Testis (tissue), 5 donors: ENCODE measurements at regions of chr5 and their contacts with region 1.

Region 1: GRCh38 chr5:67809589-67809988 is 406.0 kb upstream of the PIK3R1 start:
- DNase-seq: no peak
- H3K4me3 ChIP-seq: no peak overlapping the region
- H3K27ac ChIP-seq: no peak overlapping the region
- H3K4me1 ChIP-seq: peaks cover 19% of the 10 kb centered on the region
- H3K27me3 ChIP-seq: no peaks in the 10 kb centered on the region
- CTCF ChIP-seq: no peak
- POLR2A ChIP-seq: no peak

Region 2: DNA sequence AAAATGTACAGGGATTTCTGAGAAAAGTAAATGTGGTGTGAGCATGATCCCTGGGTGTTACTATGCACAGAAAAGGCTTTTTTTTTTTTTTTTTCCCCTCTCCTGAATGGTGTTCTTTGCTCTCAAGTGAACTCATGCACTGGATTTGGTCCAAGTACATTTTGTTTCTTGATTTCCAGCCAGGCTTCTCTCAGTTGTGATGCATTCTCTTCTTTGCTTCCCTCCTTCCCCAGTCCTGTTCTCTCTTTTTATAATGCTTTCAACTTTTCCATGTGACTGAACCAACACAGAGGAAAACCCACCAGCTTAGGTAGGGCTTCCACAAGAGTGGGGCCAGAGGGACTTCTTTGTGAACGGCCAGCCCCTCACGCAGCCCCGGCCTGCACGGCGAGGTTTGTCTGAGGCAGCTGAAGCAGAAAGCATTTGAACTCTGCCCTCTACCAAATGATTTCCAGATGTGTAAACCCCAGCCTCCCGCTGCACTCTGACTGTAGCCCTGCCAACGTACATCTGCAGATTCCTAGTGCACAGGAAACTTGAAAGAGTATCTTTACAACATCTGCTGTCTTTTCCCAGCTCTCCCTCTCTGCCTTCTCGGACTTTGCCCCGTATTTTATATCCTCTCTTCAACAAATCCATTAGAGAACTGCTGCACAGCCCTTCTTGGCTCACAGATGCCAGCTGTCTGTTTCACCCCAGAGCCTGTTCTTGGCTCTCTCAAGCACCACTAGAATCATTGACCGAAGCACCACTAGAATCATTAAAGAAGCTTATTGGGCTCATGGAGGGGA is 541.2 kb before region 1 on chr5:
- intact Hi-C with region 1: loop called (anchors 10 kb)
- DNase-seq: peak; percentile 89
- H3K4me3 ChIP-seq: no peak overlapping the region
- H3K27ac ChIP-seq: peak overlapping the region; percentile 81 to 84
- H3K4me1 ChIP-seq: peaks cover 27% of the 10 kb centered on the region
- H3K27me3 ChIP-seq: no peaks in the 10 kb centered on the region
- CTCF ChIP-seq: no peak
- POLR2A ChIP-seq: no peak

Region 3: DNA sequence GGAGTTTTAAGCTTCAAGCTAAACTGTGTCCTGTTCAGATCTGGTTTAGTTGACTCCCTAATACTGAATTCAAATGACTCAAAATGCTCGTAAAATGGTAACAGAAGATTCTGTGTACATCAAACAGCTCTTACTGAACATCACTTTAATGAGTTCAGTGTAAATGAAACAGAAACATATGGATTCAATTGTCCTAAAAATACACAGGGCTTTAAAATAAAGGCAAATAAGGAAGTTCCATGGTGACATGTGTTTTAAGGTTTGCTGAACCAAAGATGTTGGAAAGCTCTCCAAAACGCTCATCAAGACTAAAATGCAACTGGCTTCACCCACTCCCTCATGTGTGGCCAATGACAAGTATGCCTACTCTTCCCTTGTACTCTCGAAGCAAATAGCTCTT is 66.0 kb after region 1 on chr5:
- intact Hi-C with region 1: no loop called
- DNase-seq: no peak
- H3K4me3 ChIP-seq: no peak overlapping the region
- H3K27ac ChIP-seq: no peak overlapping the region
- H3K4me1 ChIP-seq: peaks cover 21% of the 10 kb centered on the region
- H3K27me3 ChIP-seq: no peaks in the 10 kb centered on the region
- CTCF ChIP-seq: no peak
- POLR2A ChIP-seq: no peak